ENCODE measurements at regions of chr14 and their contacts with region 1.

Region 1: DNA sequence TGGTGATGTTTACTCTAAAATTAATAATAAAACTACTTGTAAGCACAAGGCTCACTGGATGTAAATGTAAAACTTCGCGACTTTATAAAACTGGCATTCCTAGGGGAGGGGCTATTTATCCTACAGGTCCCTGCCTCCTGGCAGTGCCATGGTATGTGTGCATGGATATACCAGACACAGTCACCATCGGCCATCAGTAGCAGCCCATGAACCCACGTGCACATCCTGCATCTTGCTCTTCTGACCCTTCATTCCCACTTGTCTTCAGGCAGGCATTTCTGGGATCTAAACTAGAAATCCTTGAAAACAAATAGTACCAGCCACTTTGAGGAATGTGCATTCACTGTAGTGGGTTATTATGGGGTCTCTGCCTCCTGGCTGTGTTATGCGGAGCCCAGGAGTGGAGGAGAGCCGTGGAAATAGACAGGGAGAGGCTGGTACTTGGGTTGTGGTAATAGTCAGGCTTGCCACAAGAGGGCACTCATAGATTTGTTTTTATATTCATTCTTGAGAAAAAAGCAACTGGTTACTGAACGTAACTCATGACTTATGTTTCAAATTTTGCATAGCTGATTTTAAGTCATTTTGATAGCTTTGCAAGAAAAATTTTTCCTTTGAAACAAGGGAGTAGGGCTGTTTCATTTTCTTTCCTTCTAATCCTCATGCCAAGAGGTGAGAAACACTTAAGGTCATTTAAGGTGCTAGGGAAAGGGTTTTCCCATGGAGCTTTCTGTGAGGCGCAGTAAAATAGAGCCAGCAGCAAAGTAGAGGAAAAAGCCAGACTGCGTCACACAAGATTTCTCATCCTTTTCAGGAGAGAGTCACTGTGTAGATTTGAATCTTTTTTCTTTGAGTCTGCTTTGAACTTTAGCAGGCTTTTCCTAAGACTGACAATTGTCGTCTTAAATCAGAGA is 17.4 kb upstream of the GALNT16 start:
- DNase-seq: peak; percentile 61 to 67
- H3K4me3 ChIP-seq: no peak overlapping the region
- H3K27ac ChIP-seq: no peak overlapping the region
- H3K4me1 ChIP-seq: no peaks in the 10 kb centered on the region
- H3K27me3 ChIP-seq: no peaks in the 10 kb centered on the region
- CTCF ChIP-seq: peak; percentile 63 to 80 (median 76)
- POLR2A ChIP-seq: no peak

Region 2: GRCh38 chr14:69460093-69460701 is 217.6 kb after region 1 on chr14:
- intact Hi-C with region 1: loop called (anchors 5 kb)
- DNase-seq: peak; percentile 56 to 71
- H3K4me3 ChIP-seq: no peak overlapping the region
- H3K27ac ChIP-seq: no peak overlapping the region
- H3K4me1 ChIP-seq: no peaks in the 10 kb centered on the region
- H3K27me3 ChIP-seq: no peaks in the 10 kb centered on the region
- CTCF ChIP-seq: peak; percentile 23 to 86 (median 74)
- POLR2A ChIP-seq: no peak

Region 3: DNA sequence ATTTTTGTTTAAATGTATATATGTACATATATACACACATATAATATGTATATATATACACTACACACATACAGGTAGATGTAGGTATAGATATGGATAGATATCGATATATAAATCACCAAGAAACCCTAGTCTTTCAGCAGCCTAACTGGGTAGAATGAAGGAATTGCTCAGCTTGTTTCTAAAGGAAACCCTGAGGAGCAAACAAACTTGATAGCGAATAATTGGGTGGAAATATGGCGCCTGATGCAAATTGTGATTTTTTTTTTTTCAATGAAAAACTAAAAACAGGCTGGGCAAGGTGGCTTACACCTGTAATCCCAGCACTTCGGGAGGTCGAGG is 332.4 kb after region 1 on chr14:
- intact Hi-C with region 1: loop called (anchors 5 kb)
- DNase-seq: no peak
- H3K4me3 ChIP-seq: no peak overlapping the region
- H3K27ac ChIP-seq: no peak overlapping the region
- H3K4me1 ChIP-seq: peaks cover 15 to 36% of the 10 kb centered on the region in 2 donors
- H3K27me3 ChIP-seq: peaks cover 19% of the 10 kb centered on the region
- CTCF ChIP-seq: peak in 1 of 6 experiments; percentile 22
- POLR2A ChIP-seq: no peak

Measured in thyroid gland (tissue), 4 donors.